GM18951 (cell line): ENCODE measurements at regions of chr4 and their contacts with region 1.

Region 1: DNA sequence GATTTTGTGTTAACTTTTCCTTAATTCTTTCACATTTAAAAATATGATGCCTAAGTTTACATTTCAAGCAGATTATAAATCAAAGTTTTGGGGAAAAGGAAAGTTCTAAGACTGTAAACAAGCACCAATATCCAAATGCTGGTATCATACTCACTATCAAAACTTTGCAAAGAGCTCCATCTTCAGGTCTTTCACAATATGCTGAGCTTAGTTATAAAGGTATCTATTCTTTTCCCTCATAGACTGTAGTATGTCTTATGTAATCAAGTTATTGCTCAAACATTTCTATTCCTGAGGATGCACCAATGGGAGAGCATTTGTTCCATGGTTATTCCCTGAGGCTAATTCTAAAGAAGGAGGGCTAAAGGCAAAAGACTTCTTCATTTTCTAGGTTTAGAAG is 207.9 kb upstream of the FAM241A start:
- POLR2A ChIP-seq: no peak

Region 2: DNA sequence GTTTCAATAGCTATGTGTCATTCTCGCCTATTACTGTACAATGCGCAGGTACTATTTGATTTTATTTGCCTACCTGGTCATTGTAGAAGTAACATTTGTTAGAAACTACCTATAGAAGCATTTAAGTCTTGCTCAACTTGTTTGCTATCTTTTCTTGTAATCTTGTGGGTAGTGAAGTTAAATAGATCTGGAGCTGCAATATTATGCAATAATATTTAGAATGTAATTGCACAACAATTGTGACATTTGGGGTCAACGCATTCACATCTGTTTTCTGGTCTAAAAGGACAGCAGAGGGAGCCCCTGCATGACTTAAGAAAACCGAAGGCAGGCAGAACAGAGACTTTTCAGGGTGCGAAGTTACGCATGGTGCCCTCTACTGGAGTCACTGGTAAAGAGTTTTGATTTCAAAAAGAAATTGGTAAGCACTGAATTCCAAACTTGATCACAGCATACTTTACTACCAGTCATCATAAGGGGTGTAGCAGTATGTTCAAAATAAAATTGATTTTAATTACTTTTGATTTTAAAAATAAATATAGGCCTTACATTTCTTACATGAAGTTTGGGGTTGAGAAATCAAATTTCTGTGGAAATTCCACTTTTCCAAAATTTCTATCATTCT is 295.3 kb before region 1 on chr4:
- in situ Hi-C with region 1: loop called (anchors 10 kb)
- POLR2A ChIP-seq: no peak

Region 3: DNA sequence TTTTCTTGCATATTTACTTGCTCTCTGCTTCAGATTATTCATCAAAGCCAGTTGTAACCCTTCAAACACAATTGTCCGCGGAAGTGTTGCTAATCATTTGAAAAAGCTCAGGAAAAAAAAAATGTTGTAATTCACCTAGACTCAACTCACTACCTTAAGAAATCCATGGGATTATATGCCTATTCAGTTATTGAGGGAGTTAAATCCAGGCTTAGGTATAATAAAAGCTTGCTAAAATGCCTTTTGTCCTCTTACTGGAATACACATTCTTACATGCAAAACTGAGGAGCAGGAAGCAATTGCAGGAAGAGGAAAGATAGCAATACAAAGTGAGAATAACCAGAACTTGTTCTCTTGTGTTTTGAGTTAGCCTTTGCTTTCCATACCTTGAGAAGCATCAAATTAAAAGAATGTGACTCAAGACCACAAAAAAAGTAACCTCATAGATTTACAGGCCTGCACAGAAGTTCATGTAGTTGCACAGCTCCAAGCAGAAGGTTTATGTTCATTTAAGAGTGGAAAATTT is 116.5 kb after region 1 on chr4:
- in situ Hi-C with region 1: no loop called
- POLR2A ChIP-seq: no peak